Mammary epithelial cell (primary cell): ENCODE measurements at regions of chr7 and their contacts with region 1.

Region 1: DNA sequence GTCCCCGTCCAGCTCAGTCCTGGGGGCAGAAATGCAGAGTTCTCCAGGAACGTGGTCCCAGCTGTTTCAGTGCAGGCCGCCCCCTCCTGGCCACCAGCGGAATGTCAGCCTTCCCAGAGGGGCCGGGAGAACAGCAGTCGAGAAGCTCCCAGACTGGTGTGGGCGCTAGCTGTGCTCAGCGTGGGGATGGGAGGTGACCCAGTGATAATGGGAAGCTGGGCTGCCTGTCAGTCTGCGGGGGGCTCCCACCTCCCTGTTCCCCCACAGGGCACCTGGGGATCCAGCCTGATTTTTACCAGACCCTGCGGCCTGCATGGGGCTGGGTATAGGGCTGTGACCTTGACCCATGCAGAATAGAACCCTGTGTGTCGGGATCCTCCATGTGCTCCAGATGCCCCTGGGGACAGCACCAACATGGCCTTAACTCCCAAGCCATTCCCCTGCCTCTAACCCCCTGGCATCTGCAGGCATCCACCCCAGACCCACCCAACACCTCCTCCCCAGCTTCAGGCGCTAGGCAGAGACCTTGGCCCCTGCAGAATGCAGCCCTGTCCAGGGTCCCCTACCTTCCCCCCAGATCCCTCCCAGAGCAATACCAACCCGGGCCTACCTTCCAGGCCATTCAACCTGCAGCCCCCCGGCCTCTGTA is 946 bp upstream of the ELN start:
- DNase-seq: peak; percentile 21
- H3K4me3 ChIP-seq: no peak overlapping the region
- H3K27ac ChIP-seq: no peak overlapping the region
- H3K4me1 ChIP-seq: peaks cover 8% of the 10 kb centered on the region
- H3K27me3 ChIP-seq: no peaks in the 10 kb centered on the region
- CTCF ChIP-seq: peak; percentile 90

Region 2: DNA sequence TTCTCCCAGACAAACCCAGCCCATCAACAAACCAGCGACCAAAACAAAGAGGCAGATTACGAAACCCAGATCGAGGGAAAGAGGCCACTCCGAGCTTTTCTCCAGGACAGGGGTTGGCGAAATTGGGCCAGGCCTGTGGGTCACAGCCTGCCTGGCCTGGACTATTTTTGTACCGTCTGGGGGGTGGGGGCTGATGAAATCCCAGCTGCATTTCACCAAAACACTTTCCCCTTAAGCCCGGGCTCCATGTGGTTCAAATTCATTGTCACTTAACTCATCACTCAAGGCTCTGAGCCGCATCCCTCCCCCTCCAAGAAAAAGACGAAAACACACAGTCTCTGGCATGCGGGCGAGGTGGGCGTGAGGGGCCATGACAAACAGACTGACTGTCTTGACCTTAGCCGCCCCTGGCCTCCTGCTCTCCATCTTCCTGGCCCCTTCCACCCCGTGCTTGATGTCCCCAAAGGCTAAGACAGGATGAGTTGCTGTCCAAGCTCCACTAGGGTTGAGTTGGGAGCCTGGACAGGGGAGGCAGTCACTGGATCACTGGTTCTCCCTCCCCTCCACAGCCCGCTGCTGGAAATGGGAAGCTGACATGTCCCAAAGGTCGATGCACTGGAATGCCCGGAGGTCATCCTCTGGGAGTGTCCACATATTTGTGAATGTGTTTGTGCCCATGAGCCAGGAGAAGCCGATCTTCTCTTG is 146.9 kb before region 1 on chr7:
- CTCF ChIA-PET with region 1: no interaction called
- dilution Hi-C with region 1: no loop called
- in situ Hi-C with region 1: loop called in 1 of 2 experiments (anchors 10 kb)
- intact Hi-C with region 1: no loop called
- DNase-seq: no peak
- H3K4me3 ChIP-seq: no peak overlapping the region
- H3K27ac ChIP-seq: no peak overlapping the region
- H3K4me1 ChIP-seq: no peaks in the 10 kb centered on the region
- H3K27me3 ChIP-seq: peaks cover 8% of the 10 kb centered on the region
- CTCF ChIP-seq: no peak